HAP-1 (cell line): ENCODE measurements at regions of chr9 and their contacts with region 1.

Region 1: GRCh38 chr9:97984187-97985057 is 1.3 kb downstream of the ANP32B start:
- DNase-seq: peak; percentile 38 to 78
- H3K4me3 ChIP-seq: peak overlapping the region; percentile 88
- H3K4me1 ChIP-seq: peaks cover 50% of the 10 kb centered on the region
- H3K27me3 ChIP-seq: no peaks in the 10 kb centered on the region

Region 2: DNA sequence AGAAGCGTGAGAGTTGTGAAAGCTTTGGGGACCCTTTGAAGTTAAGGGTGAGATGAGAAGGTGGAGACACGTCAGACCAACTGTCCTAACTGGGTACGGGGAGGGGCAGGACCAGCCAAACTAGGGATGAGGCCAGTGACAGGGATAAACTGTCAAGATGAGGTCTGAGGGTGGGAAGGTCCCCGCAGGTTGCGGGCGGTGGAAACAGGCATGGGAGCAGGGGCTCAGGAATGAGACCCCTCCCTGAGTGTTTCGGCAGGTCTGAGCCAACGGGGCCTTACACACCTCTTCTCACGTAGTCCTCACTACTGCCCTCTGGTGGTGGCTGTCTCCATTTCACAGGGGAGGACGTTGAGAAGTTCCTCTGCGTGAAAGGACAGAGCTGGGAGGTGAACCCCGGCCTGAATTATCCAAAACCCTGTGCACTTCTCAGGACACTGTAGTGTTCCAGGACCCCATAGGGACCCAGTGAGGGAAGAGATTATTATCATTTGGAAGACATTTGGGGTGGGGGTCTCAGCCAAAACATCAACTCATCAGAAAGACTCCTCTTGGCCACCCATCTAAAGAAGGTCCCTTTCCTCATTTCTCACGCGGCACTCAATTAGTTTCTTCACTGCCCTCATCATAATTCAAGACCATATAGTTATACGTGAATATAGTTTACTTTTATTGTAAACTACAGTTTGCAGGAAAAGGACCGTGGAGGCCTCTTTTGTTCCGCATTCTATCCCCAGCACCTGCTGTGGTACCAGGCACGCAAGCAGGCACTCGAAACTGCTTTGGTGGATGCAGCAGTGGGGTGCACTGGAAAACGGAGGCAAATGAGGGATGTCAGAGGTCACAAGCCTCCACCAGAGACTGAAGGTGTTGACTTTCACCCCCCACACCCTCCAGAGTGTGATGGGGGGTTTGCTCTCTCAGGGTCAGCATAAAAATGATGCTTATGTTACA is 50.4 kb after region 1 on chr9:
- in situ Hi-C with region 1: loop called (anchors 5 kb)
- DNase-seq: peak; percentile 66 to 93
- H3K4me3 ChIP-seq: no peak overlapping the region; the same call in 1 of the 2 replicates
- H3K4me1 ChIP-seq: peaks cover 3% of the 10 kb centered on the region; the same call in 1 of the 2 replicates
- H3K27me3 ChIP-seq: no peaks in the 10 kb centered on the region

Region 3: GRCh38 chr9:98594546-98595160 is 610.2 kb after region 1 on chr9:
- in situ Hi-C with region 1: no loop called
- DNase-seq: no peak
- H3K4me3 ChIP-seq: no peak overlapping the region
- H3K4me1 ChIP-seq: no peaks in the 10 kb centered on the region
- H3K27me3 ChIP-seq: no peaks in the 10 kb centered on the region